Aorta (tissue), 5 donors: ENCODE measurements at regions of chr6 and their contacts with region 1.

Region 1: DNA sequence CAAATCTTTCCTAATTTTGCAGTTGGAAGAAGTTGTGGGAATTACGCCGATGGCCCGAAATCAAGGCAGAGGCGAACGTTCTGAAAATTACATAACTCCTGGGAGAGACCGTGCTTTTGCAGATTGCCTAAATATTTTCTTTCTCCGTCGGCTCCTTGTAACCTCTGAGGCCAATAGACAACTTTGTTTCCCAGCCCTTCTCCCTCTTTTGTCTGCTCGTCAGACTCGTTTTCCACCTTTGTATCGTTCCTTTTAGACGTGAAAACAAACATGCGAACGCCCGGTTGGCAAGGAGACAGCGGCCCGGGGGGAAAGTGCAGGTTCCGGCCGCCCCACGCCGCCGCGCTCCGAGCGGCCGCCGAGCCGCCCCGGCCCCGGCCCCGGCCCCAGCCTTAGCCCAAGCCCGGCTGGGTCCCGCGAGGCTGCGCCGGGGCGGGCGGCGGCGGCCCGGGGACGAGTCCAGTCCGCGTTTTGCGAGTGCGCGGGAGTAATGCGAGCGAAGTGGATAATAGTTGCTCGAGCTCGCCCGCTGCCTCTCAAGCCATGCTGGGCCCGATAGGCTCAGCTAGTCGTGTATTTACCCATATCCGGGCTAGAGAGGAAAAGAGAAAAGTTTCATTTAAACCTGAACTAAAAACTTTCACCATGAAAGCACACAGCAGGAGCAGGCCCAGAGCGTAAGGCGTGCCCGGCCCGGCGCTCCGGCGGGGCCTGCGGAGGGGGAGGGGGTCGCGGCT is at the start of gene ARID1B:
- DNase-seq: peak; percentile 88 to 94
- ATAC-seq: peak; percentile 81
- H3K4me3 ChIP-seq: peak within 1 kb of the TSS; percentile 87 to 96
- H3K27ac ChIP-seq: peak within 1 kb of the TSS; percentile 85 to 100
- H3K4me1 ChIP-seq: no peaks in the 10 kb centered on the region
- H3K27me3 ChIP-seq: no peaks in the 10 kb centered on the region
- total RNA-seq, gene ARID1B: 92.0 to 143 TPM

Region 2: GRCh38 chr6:156686995-156687788 is 89.8 kb before region 1 on chr6:
- intact Hi-C with region 1: loop called (anchors 1 to 5 kb)
- DNase-seq: peak; percentile 95 to 97
- ATAC-seq: peak; percentile 97
- H3K4me3 ChIP-seq: peak overlapping the region; percentile 89 to 97
- H3K27ac ChIP-seq: peak overlapping the region; percentile 94 to 99
- H3K4me1 ChIP-seq: peaks cover 1 to 2% of the 10 kb centered on the region in 2 donors
- H3K27me3 ChIP-seq: no peaks in the 10 kb centered on the region

Region 3: DNA sequence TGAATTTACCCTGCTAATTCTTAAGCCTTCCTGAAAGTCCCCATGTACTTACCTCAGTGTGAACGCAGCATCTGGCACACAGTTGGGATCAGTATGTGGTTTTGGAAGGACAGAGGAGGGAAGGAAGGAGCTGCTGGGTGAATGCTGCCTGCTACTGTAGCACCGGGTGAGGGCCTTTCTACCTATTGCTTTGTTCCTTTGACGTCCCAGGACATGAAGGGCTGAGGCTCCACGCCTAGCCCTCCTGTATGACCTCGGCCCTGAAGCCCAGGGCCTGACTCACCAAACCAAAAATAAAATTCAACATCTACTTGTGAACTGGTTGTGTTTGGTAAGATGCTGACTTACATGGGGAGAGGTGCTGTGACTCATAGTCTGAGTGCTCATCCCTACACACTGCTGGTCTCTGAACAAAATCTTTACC is 51.3 kb after region 1 on chr6:
- intact Hi-C with region 1: loop called (anchors 5 kb)
- DNase-seq: no peak
- ATAC-seq: peak; percentile 75
- H3K4me3 ChIP-seq: no peak overlapping the region
- H3K27ac ChIP-seq: peak overlapping the region; percentile 46 to 95
- H3K4me1 ChIP-seq: peaks cover 0 to 7% of the 10 kb centered on the region in 2 donors
- H3K27me3 ChIP-seq: no peaks in the 10 kb centered on the region

Region 4: DNA sequence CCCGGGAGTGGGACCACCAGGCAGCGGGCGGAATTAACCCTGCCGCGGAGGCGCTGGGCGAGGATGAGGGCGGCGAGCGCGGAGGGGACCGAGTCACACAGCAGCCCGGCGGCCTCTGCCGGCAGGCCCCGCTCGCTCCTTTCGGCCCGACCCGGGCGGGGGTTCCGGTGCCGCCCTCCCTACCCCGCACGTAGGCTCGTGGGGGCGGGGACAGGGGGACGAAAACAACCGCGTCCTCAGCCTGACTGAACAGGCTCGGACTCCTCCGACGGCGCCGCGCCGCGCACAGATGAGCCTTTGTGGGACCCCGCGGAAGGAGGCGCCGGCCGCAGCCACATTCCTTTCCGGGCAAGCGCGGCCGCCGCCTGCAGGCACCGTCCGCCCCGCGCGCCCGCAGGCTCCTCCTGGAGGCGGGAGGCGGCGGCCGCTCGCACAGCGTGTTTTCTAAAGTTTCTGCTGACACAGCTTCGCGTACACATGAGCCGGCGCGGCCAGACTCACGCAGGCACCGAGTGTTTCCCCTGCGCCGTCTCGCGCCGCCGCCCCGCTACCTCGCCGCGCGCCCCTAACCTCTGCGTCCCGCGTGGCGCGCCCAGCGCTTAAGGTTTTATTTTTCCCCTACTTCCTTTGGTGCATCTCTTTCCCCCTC is 244.5 kb after region 1 on chr6:
- intact Hi-C with region 1: loop called (anchors 1 to 5 kb)
- DNase-seq: peak; percentile 96 to 97
- ATAC-seq: peak; percentile 97
- H3K4me3 ChIP-seq: peak overlapping the region; percentile 91 to 97
- H3K27ac ChIP-seq: peak overlapping the region; percentile 98 to 100
- H3K4me1 ChIP-seq: peaks cover 0 to 2% of the 10 kb centered on the region in 2 donors
- H3K27me3 ChIP-seq: no peaks in the 10 kb centered on the region